ENCODE measurements at regions of chr10 and their contacts with region 1.

Region 1: DNA sequence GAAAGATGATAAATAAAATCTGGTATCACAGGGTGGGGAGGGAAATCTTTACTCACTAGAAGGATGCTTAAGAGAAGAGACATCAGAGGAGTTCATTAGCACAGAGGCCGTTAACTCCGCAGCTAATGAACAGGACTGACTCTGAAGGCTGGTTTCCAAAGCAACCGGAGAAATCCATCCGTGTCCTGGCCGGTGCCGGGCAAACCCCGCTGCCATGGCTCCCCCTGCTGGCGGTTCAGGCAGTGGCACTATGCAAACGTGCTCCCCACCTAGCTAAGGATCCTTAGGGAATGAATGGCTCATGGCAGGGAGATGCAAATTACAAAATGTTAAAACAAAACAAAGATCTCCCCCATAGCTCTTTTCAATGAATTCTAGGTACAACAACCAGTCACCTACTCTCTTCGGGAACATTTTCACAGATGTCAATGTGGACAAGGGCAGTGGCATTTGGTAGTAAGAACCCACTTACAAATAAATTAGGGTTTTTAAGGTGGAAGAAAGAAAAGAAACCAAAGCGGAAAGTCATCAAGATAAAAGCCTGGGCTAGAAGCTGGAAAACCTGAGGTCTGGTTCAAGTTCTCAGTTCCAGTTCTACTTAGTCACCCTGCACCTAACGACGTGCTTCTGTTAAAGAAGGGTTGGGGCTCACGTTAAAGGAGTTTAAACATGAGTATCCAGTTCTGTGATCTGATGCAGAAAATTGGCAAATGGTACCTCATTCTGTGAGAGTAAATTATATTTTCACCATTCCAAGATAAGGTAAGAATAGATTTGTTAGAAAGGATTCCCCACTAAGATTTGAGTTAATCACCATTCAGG is 138.2 kb downstream of the SVIL start:
- DNase-seq: peak; percentile 63 to 96 (median 79)
- ATAC-seq: peak; percentile 90 to 99 (median 96)
- H3K4me3 ChIP-seq: no peak overlapping the region
- H3K27ac ChIP-seq: no peak overlapping the region
- H3K4me1 ChIP-seq: no peaks in the 10 kb centered on the region
- H3K27me3 ChIP-seq: no peaks in the 10 kb centered on the region
- CTCF ChIP-seq: peak; percentile 85 to 95 (median 91)

Region 2: DNA sequence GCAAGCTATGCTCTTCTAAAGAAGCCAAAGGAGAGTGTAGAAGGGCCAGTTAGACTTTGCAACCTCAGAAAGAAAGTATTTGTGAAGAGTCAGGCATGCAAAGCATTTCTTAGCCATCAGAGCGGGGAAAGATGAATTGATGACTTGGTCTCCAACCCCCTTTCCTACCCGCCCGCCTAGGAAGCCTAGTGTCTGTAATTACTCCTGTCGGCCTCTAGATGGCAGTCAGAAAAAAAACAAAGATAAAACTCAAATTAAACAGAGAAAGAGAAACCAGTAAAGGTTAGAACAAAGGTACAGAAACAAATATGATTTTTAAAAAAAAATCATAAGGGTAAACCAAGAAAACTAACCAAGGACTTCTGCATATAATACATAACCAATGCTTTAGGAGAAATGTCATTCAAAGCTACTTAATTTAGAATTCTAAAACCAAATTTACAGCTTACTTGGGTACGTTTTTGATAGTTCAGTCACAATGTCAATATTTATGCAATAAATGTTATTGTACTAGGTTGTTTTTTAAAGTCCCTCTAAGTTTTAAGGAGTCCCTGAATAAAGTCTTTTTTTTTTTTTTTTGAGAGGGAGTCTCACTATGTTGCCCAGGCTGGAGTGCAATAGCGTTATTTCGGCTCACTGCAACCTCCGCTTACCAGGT is 110.1 kb before region 1 on chr10:
- intact Hi-C with region 1: no loop called
- DNase-seq: no peak
- ATAC-seq: peak; percentile 55 to 81 (median 76)
- H3K4me3 ChIP-seq: no peak overlapping the region
- H3K27ac ChIP-seq: no peak overlapping the region
- H3K4me1 ChIP-seq: no peaks in the 10 kb centered on the region
- H3K27me3 ChIP-seq: no peaks in the 10 kb centered on the region
- CTCF ChIP-seq: peak; percentile 58 to 76 (median 68)

Region 3: DNA sequence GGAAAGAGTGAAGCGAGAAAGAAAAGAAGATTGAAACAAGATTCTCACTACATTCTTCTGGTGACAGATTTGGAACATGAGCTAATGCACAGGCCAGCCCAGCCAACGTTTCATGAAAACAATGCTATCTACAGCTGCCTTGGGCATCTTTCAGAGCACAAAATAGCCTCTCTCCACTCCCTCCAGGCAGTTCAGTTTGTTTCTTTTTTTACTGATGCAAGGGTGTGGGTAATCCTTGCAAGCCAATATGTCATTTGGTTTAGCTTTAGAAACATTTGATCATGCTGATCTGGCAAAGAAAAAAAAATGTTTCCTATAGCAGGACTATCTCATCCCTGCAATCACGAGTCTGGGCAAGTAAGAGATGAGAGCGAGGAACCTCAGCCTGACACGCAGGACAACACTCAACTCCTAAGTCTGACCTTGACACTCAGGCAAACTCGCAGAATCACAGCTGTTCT is 102.3 kb after region 1 on chr10:
- intact Hi-C with region 1: loop called in 1 of 3 experiments (anchors 10 kb)
- DNase-seq: no peak
- ATAC-seq: peak in 2 of 4 donors; percentile 28 to 30
- H3K4me3 ChIP-seq: no peak overlapping the region
- H3K27ac ChIP-seq: no peak overlapping the region
- H3K4me1 ChIP-seq: no peaks in the 10 kb centered on the region
- H3K27me3 ChIP-seq: no peaks in the 10 kb centered on the region
- CTCF ChIP-seq: no peak

Region 4: DNA sequence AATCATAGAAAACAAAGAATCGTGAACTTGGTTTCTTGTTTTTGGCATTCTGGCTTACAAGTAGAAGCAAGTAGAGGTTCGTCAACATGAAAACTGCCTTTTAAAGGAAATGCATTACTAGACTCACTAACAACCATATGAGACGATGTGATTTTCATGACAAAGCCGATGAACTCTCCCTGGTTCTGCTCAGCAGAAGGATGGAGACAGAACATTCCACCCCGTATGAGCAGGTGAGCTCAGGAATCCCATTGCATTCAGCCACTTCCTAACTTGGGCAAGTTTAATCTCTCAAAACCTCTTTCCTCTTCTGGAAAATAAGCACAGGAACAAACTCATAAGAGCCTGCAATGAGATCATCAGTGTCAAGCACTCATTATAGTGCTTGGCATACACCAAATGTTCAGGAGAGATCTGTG is 195.6 kb after region 1 on chr10:
- intact Hi-C with region 1: no loop called
- DNase-seq: no peak
- ATAC-seq: no peak
- H3K4me3 ChIP-seq: no peak overlapping the region
- H3K27ac ChIP-seq: peak overlapping the region in 1 of 4 donors; percentile 30
- H3K4me1 ChIP-seq: peaks cover 0 to 4% (median 0%) of the 10 kb centered on the region in 3 donors
- H3K27me3 ChIP-seq: no peaks in the 10 kb centered on the region
- CTCF ChIP-seq: no peak

Region 5: DNA sequence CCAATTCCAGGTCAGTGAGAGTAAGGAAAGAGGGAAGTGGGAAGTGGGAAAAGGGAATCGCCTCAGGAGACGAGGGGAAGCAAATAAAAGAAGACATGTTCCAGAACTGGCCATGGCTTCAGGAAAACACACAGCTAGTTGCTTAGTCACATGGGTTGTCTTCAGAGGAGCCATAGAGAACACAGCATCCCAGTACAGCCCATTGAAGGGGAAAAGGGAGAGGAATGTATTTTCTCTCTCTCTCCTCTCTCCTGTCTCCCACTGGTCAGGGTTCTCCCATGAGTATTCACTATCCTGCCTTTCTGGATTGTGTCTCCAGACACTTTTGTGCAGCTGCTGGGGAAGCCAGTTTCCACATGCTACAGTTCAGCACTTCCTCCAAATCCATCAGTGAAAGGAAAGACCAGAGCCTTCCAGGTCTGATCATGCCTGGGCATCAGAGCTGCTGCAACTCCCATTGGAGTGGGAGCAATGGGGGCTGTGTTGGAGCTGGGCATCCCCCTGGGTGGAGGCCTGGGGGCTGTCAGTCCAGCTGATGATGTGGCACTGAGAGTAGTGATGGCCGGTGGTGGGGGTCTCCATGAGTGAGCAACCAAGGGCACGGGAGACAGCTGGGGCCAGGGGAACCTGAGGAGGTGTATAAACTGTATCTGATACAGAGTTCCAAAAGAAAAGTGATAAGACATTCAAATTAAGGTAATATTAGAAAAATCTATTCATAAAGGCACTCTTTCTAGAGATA is 976.0 kb after region 1 on chr10:
- intact Hi-C with region 1: no loop called
- DNase-seq: no peak
- ATAC-seq: no peak
- H3K4me3 ChIP-seq: no peak overlapping the region
- H3K27ac ChIP-seq: no peak overlapping the region
- H3K4me1 ChIP-seq: no peaks in the 10 kb centered on the region
- H3K27me3 ChIP-seq: no peaks in the 10 kb centered on the region
- CTCF ChIP-seq: no peak